HepG2 (cell line): ENCODE measurements at regions of chr17 and their contacts with region 1.

Region 1: DNA sequence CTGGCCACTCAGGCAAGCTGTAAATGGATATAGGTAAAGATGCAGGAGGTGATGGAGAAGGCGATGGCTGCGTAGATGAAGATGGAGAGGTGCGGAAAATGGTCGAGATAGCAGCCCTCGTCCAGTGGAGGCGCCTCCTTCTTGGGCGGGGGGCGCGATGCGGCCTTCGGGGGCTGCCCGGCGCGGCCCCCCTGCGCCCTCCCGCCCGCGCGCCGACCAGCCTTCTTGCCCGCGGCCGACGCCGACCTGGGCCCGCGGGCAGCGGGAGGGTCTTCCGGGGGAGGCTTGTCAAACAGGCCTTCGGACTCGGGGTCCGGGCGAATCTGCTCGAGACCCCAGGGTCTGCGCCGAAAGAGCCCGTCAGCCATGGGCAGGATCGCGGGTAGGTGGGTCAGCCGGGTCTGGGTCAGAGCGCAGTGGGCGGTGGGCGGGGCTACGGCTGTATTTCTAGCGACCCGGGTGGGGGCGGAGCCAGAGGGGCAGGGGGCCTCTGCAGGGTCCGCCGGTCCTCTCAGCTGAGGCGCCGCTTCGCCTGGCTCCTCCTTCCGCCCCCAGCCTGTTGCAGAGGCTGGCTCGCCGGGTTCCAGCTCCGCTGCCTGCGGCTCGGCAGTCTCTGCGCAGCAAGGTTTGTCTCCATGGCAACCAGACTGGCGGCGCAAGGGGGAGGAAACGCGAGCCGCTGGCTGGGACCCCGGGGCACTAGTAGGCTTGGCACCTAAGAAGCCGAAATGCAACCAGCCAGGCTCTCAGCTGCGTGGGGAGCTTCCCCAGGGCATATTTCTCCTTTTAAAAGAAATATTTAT is 14.4 kb downstream of the MIS12 start:
- DNase-seq: peak; percentile 77
- ATAC-seq: peak; percentile 97
- H3K4me3 ChIP-seq: peak overlapping the region; percentile 75 to 79 (median 75)
- H3K27ac ChIP-seq: no peak overlapping the region
- H3K4me1 ChIP-seq: peaks cover 7% of the 10 kb centered on the region
- H3K27me3 ChIP-seq: peaks cover 0 to 17% of the 10 kb centered on the region in 2 experiments; a peak in 3 of 5 replicates
- CTCF ChIP-seq: no peak
- EP300 ChIP-seq: no peak
- POLR2A ChIP-seq: peak; percentile 22 to 88; a peak in 2 of 4 replicates
- RAD21 ChIP-seq: peak; percentile 36; the same call in 1 of the 2 replicates

Region 2: DNA sequence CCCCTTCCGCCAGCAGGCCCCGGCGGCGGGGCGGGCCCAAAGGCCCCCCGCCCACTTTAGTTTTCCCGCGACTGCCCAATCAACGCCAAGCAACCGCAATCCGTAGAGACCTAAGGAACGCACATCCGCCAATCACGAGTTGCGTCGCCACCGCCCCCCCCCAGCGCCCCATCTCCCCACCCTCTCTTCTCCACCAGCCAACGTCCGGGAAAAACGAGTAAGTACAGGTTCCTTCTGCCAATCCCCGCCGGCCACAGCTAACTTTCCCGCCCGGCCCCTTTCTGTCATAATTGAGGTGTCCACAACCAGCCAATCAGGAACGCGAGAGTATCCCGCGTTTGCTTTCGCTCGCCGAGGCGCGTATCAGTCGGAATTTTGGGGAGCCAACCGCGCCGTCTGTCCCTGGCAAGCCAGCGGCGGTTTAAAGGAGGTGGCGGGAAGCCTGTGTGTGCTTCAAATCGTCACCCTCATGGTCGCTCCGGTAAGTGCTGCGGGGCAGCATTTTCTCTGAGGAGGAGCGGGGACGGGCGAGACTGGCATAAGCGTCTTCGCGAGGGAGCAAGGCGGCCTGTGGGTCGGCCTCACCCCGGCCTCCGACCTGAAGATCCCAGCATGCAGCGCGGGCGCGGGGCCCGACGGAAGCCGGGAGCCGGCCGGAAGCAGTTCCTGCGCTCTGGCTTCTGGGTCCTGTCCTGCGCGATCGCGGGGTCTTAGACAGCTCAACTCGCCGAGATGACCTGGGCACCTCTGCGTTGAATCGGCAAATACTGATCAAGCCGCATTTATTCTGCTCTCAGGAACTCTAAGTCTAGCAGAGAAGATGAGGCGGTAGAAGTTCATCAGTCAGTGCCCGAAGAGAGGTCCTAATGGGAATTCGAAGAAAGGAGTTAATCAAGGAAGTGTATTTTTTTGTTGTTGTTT is 14.3 kb before region 1 on chr17 and contains the start of gene MIS12:
- CTCF ChIA-PET with region 1: no interaction called
- POLR2A ChIA-PET with region 1: interaction called, 24 read pairs
- in situ Hi-C with region 1: no loop called
- intact Hi-C with region 1: no loop called
- DNase-seq: peak; percentile 98
- ATAC-seq: peak; percentile 96
- H3K4me3 ChIP-seq: peak within 1 kb of the TSS; percentile 90 to 97 (median 95)
- H3K27ac ChIP-seq: peak within 1 kb of the TSS; percentile 100
- H3K4me1 ChIP-seq: peaks cover 30% of the 10 kb centered on the region
- H3K27me3 ChIP-seq: peaks cover 0 to 3% of the 10 kb centered on the region in 2 experiments; a peak in 1 of 5 replicates
- CTCF ChIP-seq: no peak
- EP300 ChIP-seq: 0 out of 4 replicates have a peak, but pooled peaks of 1 of the 2 experiments have one; percentile 22
- POLR2A ChIP-seq: peak; percentile 66 to 91
- RAD21 ChIP-seq: peak; percentile 38; the same call in 1 of the 2 replicates
- total RNA-seq, gene MIS12: 28.0 and 28.3 TPM in 2 replicates